Activated CD8-positive, alpha-beta memory T cell treated with anti-CD3 and anti-CD28 coated beads, Interleukin-2, amount 10 ng/mL, durations not matched to agents 7 days and 5 days (primary cell): ENCODE measurements at regions of chr17 and their contacts with region 1.

Region 1: DNA sequence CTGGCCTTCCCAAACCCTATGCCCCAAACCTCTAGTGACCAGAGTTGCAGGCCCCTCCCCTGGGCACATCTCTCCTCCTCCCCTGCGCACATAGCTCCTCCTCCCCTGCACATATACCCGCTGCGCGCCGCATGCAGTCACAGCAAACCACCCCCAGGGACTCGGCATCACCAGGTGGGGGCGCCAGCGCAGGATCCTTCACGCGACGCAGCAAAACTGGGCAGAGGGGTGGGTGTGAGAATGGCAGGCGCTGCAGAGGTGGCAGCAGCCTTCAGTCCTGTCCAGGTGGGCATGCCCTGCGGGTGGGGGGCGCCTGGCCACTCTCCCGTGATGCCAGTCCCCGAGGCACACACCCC is 5.6 kb downstream of the CORO6 start:
- DNase-seq: peak; percentile 96
- ATAC-seq: peak; percentile 71
- H3K4me3 Mint-ChIP-seq: peak overlapping the region; percentile 80
- H3K27ac Mint-ChIP-seq: peak overlapping the region; percentile 95
- H3K4me1 Mint-ChIP-seq: peaks cover 48% of the 10 kb centered on the region
- H3K27me3 Mint-ChIP-seq: peaks cover 17% of the 10 kb centered on the region

Region 2: DNA sequence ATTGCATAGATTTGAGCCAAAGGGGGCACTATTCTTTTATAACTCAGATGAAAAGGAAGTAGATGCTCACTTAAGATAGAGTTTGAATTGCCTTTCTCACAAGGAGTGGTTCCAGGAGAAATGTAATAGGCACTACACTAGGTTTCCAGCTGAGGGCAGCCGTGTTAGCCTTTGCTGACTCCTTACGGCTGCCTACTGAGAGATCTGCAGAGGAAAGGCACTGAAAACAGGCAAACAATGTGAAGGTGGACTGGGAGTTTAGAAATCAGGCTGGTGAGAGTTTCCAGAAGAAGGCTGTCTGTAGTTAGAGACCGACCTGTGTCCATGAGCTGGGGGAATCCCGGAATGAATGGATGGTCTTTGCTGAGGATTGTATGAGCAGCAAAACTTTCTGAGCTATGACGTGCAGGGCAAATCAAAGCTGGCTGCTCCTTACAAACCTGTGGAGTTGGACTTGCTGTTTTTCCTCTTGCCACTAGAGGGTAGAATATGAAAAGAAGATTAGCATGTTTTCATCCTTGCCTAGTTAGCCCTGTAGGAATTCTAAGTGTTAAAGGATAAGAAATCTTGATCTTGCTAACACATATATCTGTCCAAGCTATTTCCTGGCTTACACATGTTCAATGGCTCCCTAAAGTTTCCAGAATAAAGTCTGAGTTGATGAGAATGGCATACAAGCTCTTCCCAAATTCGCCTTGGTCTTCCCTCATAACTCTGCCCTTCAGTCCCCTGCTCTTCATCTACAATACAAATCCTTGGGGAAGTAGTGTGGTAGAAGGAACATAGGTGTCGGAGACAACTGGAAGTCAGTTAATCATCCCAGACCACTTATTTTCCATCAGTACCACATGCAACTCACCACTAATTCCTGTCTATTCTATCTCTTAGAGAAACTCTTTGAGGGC is 247.0 kb before region 1 on chr17:
- CTCF ChIA-PET with region 1: interaction called, 15 read pairs
- DNase-seq: peak; percentile 65
- ATAC-seq: peak; percentile 93
- H3K4me3 Mint-ChIP-seq: no peak overlapping the region
- H3K27ac Mint-ChIP-seq: no peak overlapping the region
- H3K4me1 Mint-ChIP-seq: no peaks in the 10 kb centered on the region
- H3K27me3 Mint-ChIP-seq: no peaks in the 10 kb centered on the region

Region 3: DNA sequence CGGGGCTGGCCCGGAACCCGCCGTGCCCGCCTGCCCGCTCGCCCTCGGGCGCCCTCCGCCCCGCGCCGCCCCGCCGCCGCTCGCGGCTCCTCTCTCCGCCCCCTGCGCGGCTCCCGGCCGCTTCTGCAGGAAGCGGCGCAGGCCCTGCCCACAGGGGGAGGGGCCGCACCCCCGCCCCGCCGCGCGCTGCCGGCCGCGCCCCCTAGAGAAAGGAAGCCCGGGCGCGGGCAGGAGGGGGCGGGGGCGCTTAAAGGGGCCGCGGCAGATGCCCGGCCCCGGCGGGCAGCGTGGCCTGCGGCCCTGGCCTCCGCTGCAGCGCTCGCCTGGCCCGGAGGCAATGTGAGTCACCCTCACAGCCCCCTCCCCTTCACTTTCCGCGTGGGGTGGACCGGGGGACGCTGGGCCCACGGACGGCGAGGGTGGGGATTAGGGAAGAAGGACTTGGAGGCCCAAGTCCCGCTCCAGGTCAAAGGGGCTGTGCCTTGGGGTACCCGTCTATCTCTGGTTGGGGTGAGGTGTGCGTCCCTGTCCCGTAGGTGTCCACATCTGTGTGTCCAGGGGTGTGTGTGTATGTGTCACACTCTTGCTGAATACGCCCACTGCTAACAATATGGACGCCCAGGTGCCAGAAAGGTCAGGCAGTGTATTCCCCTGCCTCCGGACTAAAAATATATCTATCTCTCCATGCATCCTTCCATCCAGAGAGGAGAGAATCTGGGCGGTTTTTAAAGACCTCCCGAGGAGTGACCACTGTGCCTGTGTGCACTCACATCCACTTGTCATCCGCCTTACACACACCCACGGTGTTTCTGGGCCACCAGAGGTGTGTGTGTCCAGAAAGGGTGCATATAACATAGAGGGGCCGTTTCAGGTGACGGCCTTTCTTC is 27.3 kb before region 1 on chr17 and contains the start of gene GIT1:
- CTCF ChIA-PET with region 1: interaction called, 458 read pairs
- DNase-seq: peak; percentile 87
- ATAC-seq: peak; percentile 75
- H3K4me3 Mint-ChIP-seq: peak within 1 kb of the TSS; percentile 87
- H3K27ac Mint-ChIP-seq: peak within 1 kb of the TSS; percentile 88
- H3K4me1 Mint-ChIP-seq: peaks cover 75% of the 10 kb centered on the region
- H3K27me3 Mint-ChIP-seq: no peaks in the 10 kb centered on the region
- total RNA-seq, gene GIT1: 69.5 to 79.5 TPM

Region 4: GRCh38 chr17:29633886-29634285 is 16.8 kb after region 1 on chr17:
- CTCF ChIA-PET with region 1: interaction called, 55 read pairs
- DNase-seq: no peak
- ATAC-seq: peak; percentile 51
- H3K4me3 Mint-ChIP-seq: peak overlapping the region; percentile 5
- H3K27ac Mint-ChIP-seq: peak overlapping the region; percentile 61
- H3K4me1 Mint-ChIP-seq: peaks cover 23% of the 10 kb centered on the region
- H3K27me3 Mint-ChIP-seq: no peaks in the 10 kb centered on the region

Region 5: DNA sequence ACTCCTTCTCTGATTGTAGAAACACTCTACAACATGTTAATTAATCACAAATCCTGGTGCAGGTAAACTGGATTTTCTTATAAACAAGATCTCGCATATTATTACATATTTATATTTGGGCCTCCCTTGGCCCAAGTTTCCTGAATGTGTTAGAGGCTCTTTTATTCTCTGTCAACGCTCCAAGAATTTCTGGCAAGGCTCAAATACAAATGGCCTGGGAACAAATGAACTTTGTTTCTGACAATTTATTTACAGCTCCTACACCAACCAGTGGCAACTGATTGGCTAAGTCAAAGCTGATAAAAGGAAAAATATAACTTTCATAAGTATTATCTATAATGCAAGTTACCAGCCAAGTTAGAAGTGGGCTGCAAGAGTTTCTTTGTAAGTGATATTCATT is 70.5 kb after region 1 on chr17:
- CTCF ChIA-PET with region 1: interaction called, 12 read pairs
- DNase-seq: no peak
- ATAC-seq: no peak
- H3K4me3 Mint-ChIP-seq: no peak overlapping the region
- H3K27ac Mint-ChIP-seq: no peak overlapping the region
- H3K4me1 Mint-ChIP-seq: peaks cover 13% of the 10 kb centered on the region
- H3K27me3 Mint-ChIP-seq: no peaks in the 10 kb centered on the region

Region 6: GRCh38 chr17:29716566-29716965 is 99.5 kb after region 1 on chr17:
- CTCF ChIA-PET with region 1: no interaction called
- DNase-seq: no peak
- ATAC-seq: no peak
- H3K4me3 Mint-ChIP-seq: no peak overlapping the region
- H3K27ac Mint-ChIP-seq: no peak overlapping the region
- H3K4me1 Mint-ChIP-seq: peaks cover 17% of the 10 kb centered on the region
- H3K27me3 Mint-ChIP-seq: no peaks in the 10 kb centered on the region

Region 7: GRCh38 chr17:29760761-29761696 is 143.9 kb after region 1 on chr17:
- CTCF ChIA-PET with region 1: interaction called, 23 read pairs
- DNase-seq: peak; percentile 95
- ATAC-seq: peak; percentile 95
- H3K4me3 Mint-ChIP-seq: peak overlapping the region; percentile 98
- H3K27ac Mint-ChIP-seq: peak overlapping the region; percentile 97
- H3K4me1 Mint-ChIP-seq: peaks cover 34% of the 10 kb centered on the region
- H3K27me3 Mint-ChIP-seq: no peaks in the 10 kb centered on the region

Region 8: DNA sequence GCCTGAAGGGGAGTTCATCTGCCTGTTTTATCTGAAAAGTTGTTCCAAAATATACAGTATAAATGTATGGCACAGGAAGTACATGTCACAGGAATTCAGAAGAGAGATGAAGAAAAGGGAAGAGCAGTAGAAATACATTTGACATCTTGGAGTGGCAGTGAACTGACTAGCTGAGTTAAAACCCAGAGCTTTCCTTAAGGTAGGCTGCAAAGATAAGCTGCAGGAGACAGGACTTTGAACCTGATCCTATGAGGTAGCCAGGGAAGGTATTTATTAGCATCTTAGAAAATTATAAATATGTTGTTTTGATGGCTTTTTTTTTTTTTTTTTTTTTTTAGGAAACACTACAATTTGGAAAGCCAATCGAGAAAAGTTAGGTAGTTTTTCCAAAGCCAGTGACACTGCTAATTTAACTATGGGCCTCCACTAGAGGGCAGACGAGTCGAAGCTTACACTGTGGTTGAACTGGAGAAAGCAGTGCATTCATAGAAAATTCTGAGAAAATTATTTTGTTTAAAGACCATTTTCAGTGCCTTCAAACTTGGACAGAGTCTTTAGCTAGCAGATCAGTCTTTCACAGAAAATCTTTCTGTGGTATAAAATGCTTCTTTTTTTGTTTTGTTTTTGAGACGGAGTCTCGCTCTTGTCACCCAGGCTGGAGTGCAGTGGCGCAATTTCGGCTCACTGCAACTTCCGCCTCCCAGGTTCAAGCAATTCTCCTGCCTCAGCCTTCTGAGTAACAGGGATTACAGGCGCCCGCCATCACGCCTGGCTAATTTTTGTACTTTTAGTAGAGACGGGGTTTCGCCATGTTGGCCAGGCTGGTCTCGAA is 190.6 kb after region 1 on chr17:
- CTCF ChIA-PET with region 1: interaction called, 16 read pairs
- DNase-seq: peak; percentile 78
- ATAC-seq: peak; percentile 78
- H3K4me3 Mint-ChIP-seq: no peak overlapping the region
- H3K27ac Mint-ChIP-seq: no peak overlapping the region
- H3K4me1 Mint-ChIP-seq: peaks cover 19% of the 10 kb centered on the region
- H3K27me3 Mint-ChIP-seq: no peaks in the 10 kb centered on the region